ENCODE measurements at regions of chr4 and their contacts with region 1.

Region 1: GRCh38 chr4:183504064-183504929 is 561 bp upstream of the ING2 start:
- DNase-seq: peak; percentile 100
- ATAC-seq: peak; percentile 93 to 98 (median 94)
- H3K4me3 ChIP-seq: peak overlapping the region; percentile 96
- H3K27ac ChIP-seq: peak overlapping the region; percentile 97
- H3K4me1 ChIP-seq: peaks cover 27% of the 10 kb centered on the region
- H3K27me3 ChIP-seq: no peaks in the 10 kb centered on the region
- CTCF ChIP-seq: peak; percentile 27

Region 2: GRCh38 chr4:183118585-183118984 is 385.7 kb before region 1 on chr4:
- intact Hi-C with region 1: no loop called
- DNase-seq: no peak
- ATAC-seq: no peak
- H3K4me3 ChIP-seq: no peak overlapping the region
- H3K27ac ChIP-seq: no peak overlapping the region
- H3K4me1 ChIP-seq: peaks cover 6% of the 10 kb centered on the region
- H3K27me3 ChIP-seq: no peaks in the 10 kb centered on the region
- CTCF ChIP-seq: no peak

Region 3: GRCh38 chr4:183444214-183445066 is 59.9 kb before region 1 on chr4 and contains the start of gene CDKN2AIP:
- intact Hi-C with region 1: loop called in 1 of 2 experiments (anchors 5 kb)
- DNase-seq: peak; percentile 95 to 97
- ATAC-seq: peak; percentile 94 to 96 (median 96)
- H3K4me3 ChIP-seq: peak within 1 kb of the TSS; percentile 98
- H3K27ac ChIP-seq: peak within 1 kb of the TSS; percentile 99
- H3K4me1 ChIP-seq: peaks cover 52% of the 10 kb centered on the region
- H3K27me3 ChIP-seq: no peaks in the 10 kb centered on the region
- CTCF ChIP-seq: peak; percentile 17
- total RNA-seq, gene CDKN2AIP: 6.9 to 13.1 (median 8.3) TPM

Region 4: GRCh38 chr4:183602557-183603027 is 98.3 kb after region 1 on chr4:
- intact Hi-C with region 1: loop called (anchors 5 kb)
- DNase-seq: no peak
- ATAC-seq: peak in 2 of 4 donors; percentile 60 to 76
- H3K4me3 ChIP-seq: no peak overlapping the region
- H3K27ac ChIP-seq: no peak overlapping the region
- H3K4me1 ChIP-seq: no peaks in the 10 kb centered on the region
- H3K27me3 ChIP-seq: no peaks in the 10 kb centered on the region
- CTCF ChIP-seq: peak; percentile 43

Region 5: DNA sequence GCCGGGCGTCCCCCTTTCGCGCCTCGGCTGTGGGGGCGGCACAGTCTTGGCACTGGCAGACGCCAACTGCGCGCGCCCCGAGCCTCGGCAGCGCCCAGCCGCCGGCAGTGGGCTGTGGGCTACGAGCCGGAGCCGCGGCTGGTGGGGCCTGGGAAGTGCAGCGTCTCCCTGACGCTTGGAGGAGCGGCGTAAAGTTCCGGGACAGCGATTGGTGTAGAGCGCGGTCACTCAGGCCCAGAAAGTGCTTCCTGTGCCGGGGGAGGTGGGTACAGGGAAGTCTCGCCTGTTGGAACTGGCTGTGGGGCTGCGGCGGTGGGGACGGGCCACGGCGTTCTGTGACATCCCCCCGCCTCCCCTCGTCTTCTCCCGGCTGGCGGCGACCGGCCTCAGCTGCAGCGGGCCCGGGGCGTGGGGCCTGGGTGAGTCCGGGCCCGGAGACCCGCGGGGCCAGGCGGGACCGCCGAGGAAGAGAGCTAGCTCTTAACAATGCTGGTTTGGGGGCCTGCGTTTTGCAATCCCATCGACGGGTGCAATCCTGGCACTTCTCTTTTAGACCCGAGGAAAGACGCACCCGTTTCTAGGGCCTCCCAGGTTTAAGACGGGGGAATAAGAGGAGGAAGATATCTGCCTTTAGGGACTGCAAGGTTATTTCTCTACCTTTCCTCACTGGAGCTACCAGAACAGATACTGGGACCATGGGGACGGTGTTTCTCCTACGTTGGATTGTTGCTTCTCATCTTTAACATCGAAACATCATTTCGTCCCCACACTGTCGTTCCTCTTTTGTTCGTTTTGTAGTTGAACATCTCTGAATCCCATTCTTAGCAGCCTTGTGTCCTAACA is 155.0 kb after region 1 on chr4 and contains the starts of genes RWDD4 and TRAPPC11:
- intact Hi-C with region 1: loop called in 1 of 2 experiments (anchors 1 kb)
- DNase-seq: peak; percentile 98 to 99
- ATAC-seq: peak; percentile 100
- H3K4me3 ChIP-seq: peak within 1 kb of the TSS; percentile 92
- H3K27ac ChIP-seq: peak within 1 kb of the TSS; percentile 89
- H3K4me1 ChIP-seq: peaks cover 18% of the 10 kb centered on the region
- H3K27me3 ChIP-seq: no peaks in the 10 kb centered on the region
- CTCF ChIP-seq: peak; percentile 31
- total RNA-seq, gene RWDD4: 19.1 to 33.5 (median 29.8) TPM
- total RNA-seq, gene TRAPPC11: 20.6 to 24.3 (median 23.9) TPM